ENCODE measurements at regions of chr14 and their contacts with region 1.

Region 1: GRCh38 chr14:31435276-31435675 is 14.9 kb upstream of the HEATR5A start:
- DNase-seq: no peak
- ATAC-seq: no peak
- H3K4me3 ChIP-seq: no peak overlapping the region
- H3K27ac ChIP-seq: no peak overlapping the region
- H3K4me1 ChIP-seq: no peaks in the 10 kb centered on the region
- H3K27me3 ChIP-seq: no peaks in the 10 kb centered on the region
- CTCF ChIP-seq: no peak
- POLR2A ChIP-seq: no peak
- RAD21 ChIP-seq: no peak

Region 2: DNA sequence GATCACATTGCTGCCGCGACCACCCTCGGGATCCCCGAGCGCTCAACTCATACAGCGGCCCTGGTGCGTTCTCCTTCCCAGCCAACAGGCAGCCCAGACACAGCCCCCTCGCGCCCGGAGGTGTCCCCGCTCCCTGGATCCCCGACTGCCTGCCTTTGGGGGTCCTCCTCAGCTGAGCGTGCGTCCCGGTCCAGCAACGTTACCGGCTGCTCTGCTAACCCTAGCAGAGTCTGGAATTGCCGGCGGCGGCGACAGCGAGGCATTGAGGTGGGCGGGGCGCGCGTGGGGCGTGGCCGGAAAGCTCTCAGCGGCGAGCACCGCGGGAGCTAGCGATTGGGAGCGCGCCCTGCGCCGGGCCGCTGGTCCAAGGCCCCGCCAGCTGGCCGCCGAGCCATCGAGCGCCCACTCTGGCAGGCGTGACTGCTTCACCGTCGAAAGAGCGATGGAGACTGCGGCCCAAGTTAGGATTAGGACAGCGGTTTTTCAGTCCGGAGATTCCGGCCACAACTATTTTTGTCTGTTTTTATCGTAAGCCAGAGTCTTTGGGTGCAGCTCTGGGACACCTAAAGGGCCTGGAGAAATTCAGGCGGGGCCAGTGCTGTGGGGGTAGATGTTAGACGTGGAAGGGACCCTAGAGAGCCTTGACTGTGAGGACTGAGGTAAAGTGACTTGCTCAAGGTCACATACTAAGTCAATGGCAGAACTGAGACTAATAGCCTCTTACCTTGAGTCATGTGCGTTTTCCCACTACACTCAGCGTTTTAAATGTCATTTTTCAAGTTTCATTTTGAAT is 14.8 kb before region 1 on chr14 and contains the start of gene HEATR5A:
- CTCF ChIA-PET with region 1: interaction called, 3 read pairs
- POLR2A ChIA-PET with region 1: interaction called, 10 read pairs
- RAD21 ChIA-PET with region 1: no interaction called
- intact Hi-C with region 1: no loop called
- DNase-seq: peak; percentile 83
- ATAC-seq: peak; percentile 90
- H3K4me3 ChIP-seq: peak within 1 kb of the TSS; percentile 95 to 96
- H3K27ac ChIP-seq: peak within 1 kb of the TSS; percentile 75
- H3K4me1 ChIP-seq: peaks cover 18 to 31% of the 10 kb centered on the region in 2 experiments
- H3K27me3 ChIP-seq: no peaks in the 10 kb centered on the region
- CTCF ChIP-seq: no peak
- POLR2A ChIP-seq: peak; percentile 98
- RAD21 ChIP-seq: no peak
- total RNA-seq, gene HEATR5A: 20.9 TPM

Measured in HCT116 (cell line).